ENCODE measurements at regions of chr5 and their contacts with region 1.

Region 1: DNA sequence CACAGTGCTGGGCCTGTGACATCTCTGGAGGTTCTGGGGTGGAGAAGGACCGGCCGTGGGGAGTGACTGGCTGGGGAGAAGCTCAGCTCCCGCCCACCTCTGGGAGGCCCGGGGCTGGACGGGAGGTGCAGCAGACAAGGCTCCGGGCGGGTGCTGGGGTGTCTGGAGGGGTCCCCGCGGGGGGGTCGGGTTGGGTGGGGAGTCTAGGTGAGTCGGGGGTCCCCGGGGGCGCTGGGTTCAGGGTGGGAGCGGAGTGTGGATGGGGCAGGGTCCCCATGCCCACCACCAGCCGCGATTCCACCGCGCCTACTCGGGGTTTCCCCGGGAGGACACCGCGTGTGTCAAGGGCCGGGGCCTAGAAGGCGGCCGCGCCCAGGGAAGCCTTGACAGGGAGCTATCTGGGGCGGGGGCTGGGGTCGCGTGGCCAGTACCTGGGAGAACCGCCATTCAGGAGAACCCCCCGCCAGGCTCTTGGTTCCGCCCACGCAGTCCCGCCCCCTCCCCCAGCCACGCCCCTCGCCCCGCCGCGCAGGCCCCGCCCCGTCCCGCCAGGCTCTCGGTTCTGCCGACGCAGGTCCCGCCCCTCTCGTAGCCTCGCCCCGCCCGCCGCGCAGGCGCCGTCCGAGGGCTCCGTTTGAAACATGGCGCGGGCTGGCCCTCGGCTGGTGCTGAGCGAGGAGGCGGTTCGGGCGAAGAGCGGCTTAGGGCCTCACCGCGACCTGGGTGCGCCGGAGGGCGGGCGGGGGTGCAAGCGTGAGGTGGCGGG is at the start of gene CEP72:
- DNase-seq: peak; percentile 82 to 98
- H3K4me3 ChIP-seq: peak within 1 kb of the TSS; percentile 98
- H3K27ac ChIP-seq: peak within 1 kb of the TSS; percentile 81
- H3K4me1 ChIP-seq: peaks cover 25% of the 10 kb centered on the region
- H3K27me3 ChIP-seq: 0 out of 2 replicates have a peak, but pooled peaks cover 6% of the 10 kb centered on the region
- CTCF ChIP-seq: no peak
- total RNA-seq, gene CEP72: 83.3 and 86.8 TPM in 2 replicates

Region 2: GRCh38 chr5:195401-196160 is 416.3 kb before region 1 on chr5:
- CTCF ChIA-PET with region 1: interaction called, 16 read pairs
- POLR2A ChIA-PET with region 1: no interaction called
- intact Hi-C with region 1: no loop called
- DNase-seq: no peak
- H3K4me3 ChIP-seq: no peak overlapping the region
- H3K27ac ChIP-seq: no peak overlapping the region
- H3K4me1 ChIP-seq: no peaks in the 10 kb centered on the region
- H3K27me3 ChIP-seq: peaks cover 24% of the 10 kb centered on the region
- CTCF ChIP-seq: 0 out of 2 replicates have a peak, but pooled peaks have one; percentile 30

Region 3: GRCh38 chr5:317086-317811 is 294.7 kb before region 1 on chr5:
- CTCF ChIA-PET with region 1: interaction called, 9 read pairs
- POLR2A ChIA-PET with region 1: no interaction called
- intact Hi-C with region 1: loop called (anchors 5 kb)
- DNase-seq: peak in 1 of 2 experiments; percentile 89
- H3K4me3 ChIP-seq: no peak overlapping the region
- H3K27ac ChIP-seq: no peak overlapping the region
- H3K4me1 ChIP-seq: no peaks in the 10 kb centered on the region
- H3K27me3 ChIP-seq: no peaks in the 10 kb centered on the region
- CTCF ChIP-seq: peak; percentile 69

Region 4: GRCh38 chr5:458547-459353 is 153.2 kb before region 1 on chr5:
- CTCF ChIA-PET with region 1: no interaction called
- POLR2A ChIA-PET with region 1: no interaction called
- intact Hi-C with region 1: loop called (anchors 1 kb)
- DNase-seq: peak; percentile 99
- H3K4me3 ChIP-seq: no peak overlapping the region; the same call in 1 of the 2 replicates
- H3K27ac ChIP-seq: peak overlapping the region; percentile 79
- H3K4me1 ChIP-seq: peaks cover 23% of the 10 kb centered on the region
- H3K27me3 ChIP-seq: no peaks in the 10 kb centered on the region
- CTCF ChIP-seq: 0 out of 2 replicates have a peak, but pooled peaks have one; percentile 14

Region 5: GRCh38 chr5:509642-510185 is 102.2 kb before region 1 on chr5:
- CTCF ChIA-PET with region 1: no interaction called
- POLR2A ChIA-PET with region 1: interaction called, 18 read pairs
- intact Hi-C with region 1: no loop called
- DNase-seq: no peak
- H3K4me3 ChIP-seq: no peak overlapping the region
- H3K27ac ChIP-seq: no peak overlapping the region
- H3K4me1 ChIP-seq: no peaks in the 10 kb centered on the region
- H3K27me3 ChIP-seq: peaks cover 84% of the 10 kb centered on the region
- CTCF ChIP-seq: no peak

Region 6: GRCh38 chr5:892394-893136 is 280.7 kb after region 1 on chr5 and contains the starts of genes BRD9 and TRIP13:
- CTCF ChIA-PET with region 1: no interaction called
- POLR2A ChIA-PET with region 1: no interaction called
- intact Hi-C with region 1: loop called (anchors 5 kb)
- DNase-seq: peak; percentile 78 to 97
- H3K4me3 ChIP-seq: peak within 1 kb of the TSS; percentile 64
- H3K27ac ChIP-seq: peak within 1 kb of the TSS; percentile 44
- H3K4me1 ChIP-seq: peaks cover 18% of the 10 kb centered on the region
- H3K27me3 ChIP-seq: no peaks in the 10 kb centered on the region
- CTCF ChIP-seq: peak; percentile 27; the same call in 1 of the 2 replicates
- total RNA-seq, gene BRD9: 102 and 112 TPM in 2 replicates
- total RNA-seq, gene TRIP13: 56.1 and 74.0 TPM in 2 replicates